ENCODE measurements at regions of chr2 and their contacts with region 1.

Region 1: DNA sequence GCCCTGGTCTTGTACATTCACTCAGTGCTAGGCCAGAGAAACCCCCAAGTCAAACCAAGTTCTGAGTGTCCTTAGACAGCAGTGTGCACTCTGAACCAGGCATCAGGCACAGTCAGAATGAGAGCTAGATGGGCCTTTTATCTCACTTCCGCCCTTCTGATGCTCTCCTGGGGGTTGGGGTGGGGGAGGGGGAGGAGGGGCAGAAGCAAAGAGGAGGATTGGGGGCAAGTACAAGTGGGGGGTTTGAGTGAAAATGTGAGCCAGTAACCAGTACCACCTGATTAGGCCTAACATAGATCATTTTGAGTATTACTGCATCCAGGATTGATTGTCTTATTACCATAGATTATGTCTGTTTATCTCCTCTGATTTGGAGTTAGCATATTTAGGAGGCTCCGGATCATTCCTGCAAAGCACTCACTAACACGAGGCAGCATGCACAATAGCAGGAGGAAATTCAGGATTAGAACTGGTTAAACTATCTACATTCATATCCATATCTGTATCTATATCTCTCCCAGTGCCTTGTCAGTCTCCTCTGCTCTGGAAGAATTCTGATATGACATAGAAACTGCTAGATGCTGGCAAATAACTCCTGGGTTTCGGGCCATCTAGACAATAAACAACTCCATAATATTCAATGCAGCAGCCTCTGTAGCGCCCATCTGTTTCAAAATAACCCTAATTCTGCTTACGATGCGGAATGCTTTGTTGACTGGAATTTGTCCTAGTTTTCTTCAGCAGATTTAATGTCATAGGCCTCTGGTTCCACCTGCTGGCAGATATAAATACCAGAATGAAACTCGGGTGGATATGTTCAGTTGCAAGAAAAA is 149.1 kb downstream of the RHBDD1 start:
- DNase-seq: peak; percentile 30
- H3K4me3 Mint-ChIP-seq: no peak overlapping the region
- H3K27ac Mint-ChIP-seq: no peak overlapping the region
- H3K4me1 Mint-ChIP-seq: peaks cover 23% of the 10 kb centered on the region
- H3K27me3 Mint-ChIP-seq: no peaks in the 10 kb centered on the region

Region 2: DNA sequence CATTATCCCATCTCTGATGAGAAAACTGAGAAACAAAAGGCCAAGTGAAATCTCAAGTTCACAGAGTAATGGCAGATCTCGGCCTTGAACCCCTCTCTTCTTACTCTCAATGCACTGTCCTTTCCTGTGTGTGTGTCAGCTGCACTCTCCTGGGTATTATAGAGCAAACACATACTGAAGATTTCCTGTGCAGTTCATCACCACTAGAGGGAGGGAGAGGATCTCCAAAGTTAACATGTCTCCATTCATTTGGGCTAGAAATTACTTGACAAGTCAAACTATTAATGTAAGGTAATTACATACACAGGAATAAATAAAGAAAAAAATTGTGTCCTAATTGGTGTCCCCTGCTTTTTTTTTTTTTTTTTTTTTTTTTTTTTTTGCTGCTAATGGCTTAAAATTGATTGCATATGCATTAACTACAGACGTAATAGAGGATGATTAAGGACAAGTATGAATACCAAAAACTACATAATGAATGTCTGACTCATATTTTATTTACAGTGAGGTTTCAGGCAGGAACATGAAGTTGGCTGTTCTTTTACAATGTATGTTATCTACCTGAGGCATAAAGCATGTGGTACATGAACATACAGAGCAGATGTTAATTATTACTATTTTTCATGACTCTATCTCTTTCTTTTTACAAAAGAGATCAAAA is 1316.2 kb before region 1 on chr2:
- intact Hi-C with region 1: loop called (anchors 1 kb)
- DNase-seq: no peak
- H3K4me3 Mint-ChIP-seq: no peak overlapping the region
- H3K27ac Mint-ChIP-seq: no peak overlapping the region
- H3K4me1 Mint-ChIP-seq: no peaks in the 10 kb centered on the region
- H3K27me3 Mint-ChIP-seq: peaks cover 5% of the 10 kb centered on the region

Region 3: GRCh38 chr2:226215902-226216503 is 769.0 kb before region 1 on chr2:
- intact Hi-C with region 1: loop called (anchors 1 kb)
- DNase-seq: peak; percentile 26
- H3K4me3 Mint-ChIP-seq: no peak overlapping the region
- H3K27ac Mint-ChIP-seq: no peak overlapping the region
- H3K4me1 Mint-ChIP-seq: no peaks in the 10 kb centered on the region
- H3K27me3 Mint-ChIP-seq: peaks cover 2% of the 10 kb centered on the region

Region 4: GRCh38 chr2:226423498-226423960 is 561.4 kb before region 1 on chr2:
- intact Hi-C with region 1: loop called (anchors 10 kb)
- DNase-seq: peak; percentile 40
- H3K4me3 Mint-ChIP-seq: no peak overlapping the region
- H3K27ac Mint-ChIP-seq: no peak overlapping the region
- H3K4me1 Mint-ChIP-seq: peaks cover 12% of the 10 kb centered on the region
- H3K27me3 Mint-ChIP-seq: peaks cover 22% of the 10 kb centered on the region

Region 5: DNA sequence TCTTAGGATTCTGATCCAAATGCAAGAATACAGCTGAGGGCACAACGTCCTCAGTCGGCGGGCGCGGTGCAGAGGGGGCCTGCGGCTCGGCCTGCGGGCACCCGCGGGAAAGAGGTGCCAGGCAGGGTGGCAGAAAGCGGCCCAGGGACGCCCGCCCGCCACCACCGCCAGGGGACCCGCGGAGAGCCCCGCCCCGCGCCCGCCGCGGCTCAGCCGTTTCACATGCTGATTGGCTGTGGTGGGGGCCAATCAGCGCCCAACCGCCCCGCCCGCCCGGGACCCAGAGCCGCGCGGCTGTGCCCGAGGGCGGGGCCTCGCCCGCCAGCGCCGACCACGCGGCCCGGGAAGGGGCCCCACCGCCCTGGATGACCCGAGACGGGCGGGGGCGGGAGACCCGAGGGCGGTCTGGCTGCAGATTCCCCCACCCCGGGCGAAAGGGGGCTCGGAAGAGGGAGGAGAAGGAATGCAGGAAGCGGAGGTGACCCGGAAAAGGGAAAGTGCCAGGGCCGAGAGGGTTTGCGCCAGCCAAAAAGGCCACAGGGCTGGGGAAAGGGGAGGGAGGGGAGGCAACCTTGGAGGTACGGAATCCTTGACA is 193.4 kb before region 1 on chr2:
- intact Hi-C with region 1: no loop called
- DNase-seq: peak; percentile 86
- H3K4me3 Mint-ChIP-seq: peak overlapping the region; percentile 84
- H3K27ac Mint-ChIP-seq: peak overlapping the region; percentile 90
- H3K4me1 Mint-ChIP-seq: peaks cover 36% of the 10 kb centered on the region
- H3K27me3 Mint-ChIP-seq: peaks cover 6% of the 10 kb centered on the region